ENCODE measurements at regions of chr1 and their contacts with region 1.

Region 1: GRCh38 chr1:91876040-91876470 is 9.9 kb downstream of the TGFBR3 start:
- DNase-seq: peak; percentile 61
- H3K4me3 Mint-ChIP-seq: no peak overlapping the region
- H3K27ac Mint-ChIP-seq: peak overlapping the region; percentile 5
- H3K4me1 Mint-ChIP-seq: peaks cover 74% of the 10 kb centered on the region
- H3K27me3 Mint-ChIP-seq: no peaks in the 10 kb centered on the region

Region 2: GRCh38 chr1:91732291-91733107 is 143.6 kb before region 1 on chr1:
- CTCF ChIA-PET with region 1: no interaction called
- intact Hi-C with region 1: loop called (anchors 5 kb)
- DNase-seq: peak; percentile 24
- H3K4me3 Mint-ChIP-seq: no peak overlapping the region
- H3K27ac Mint-ChIP-seq: peak overlapping the region; percentile 64
- H3K4me1 Mint-ChIP-seq: peaks cover 30% of the 10 kb centered on the region
- H3K27me3 Mint-ChIP-seq: no peaks in the 10 kb centered on the region

Region 3: DNA sequence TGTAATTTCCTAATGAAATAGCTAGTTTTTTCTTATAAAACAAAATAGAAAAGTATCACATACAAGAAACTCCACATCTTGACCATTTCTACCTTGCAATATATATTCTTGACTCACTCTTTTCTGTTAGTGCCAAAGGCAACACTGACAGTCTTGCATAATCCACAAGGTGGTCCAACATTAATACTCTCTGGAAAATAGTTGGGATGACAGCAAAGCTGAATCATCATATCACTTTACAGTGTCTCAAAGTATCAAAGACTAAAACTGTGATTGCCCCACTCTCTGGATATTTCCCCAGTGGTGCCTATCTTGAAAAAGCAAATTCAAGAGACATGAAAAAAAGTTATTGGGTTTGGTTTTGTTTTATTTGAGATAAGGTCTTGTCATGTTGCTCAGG is 24.5 kb after region 1 on chr1:
- CTCF ChIA-PET with region 1: no interaction called
- intact Hi-C with region 1: no loop called
- DNase-seq: no peak
- H3K4me3 Mint-ChIP-seq: no peak overlapping the region
- H3K27ac Mint-ChIP-seq: no peak overlapping the region
- H3K4me1 Mint-ChIP-seq: peaks cover 4% of the 10 kb centered on the region
- H3K27me3 Mint-ChIP-seq: no peaks in the 10 kb centered on the region

Region 4: DNA sequence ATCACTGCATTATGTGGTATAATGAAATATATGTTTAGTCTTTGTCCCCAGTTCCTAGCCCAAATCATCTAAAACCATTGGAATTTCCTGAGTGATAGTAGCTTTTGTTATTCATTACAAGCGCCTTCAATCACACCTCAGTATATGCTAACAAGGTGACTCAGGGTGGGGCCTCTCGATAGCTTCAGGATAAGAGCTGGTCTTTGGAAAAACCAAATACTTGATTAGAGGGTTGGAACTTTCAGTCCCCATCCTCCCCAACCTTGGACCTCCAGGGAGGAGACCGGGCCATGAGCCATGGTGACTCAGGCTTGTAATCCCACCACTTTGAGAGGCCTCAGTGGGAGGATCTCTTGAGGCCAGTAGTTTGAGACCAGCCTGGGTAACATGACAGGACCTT is 68.0 kb after region 1 on chr1:
- CTCF ChIA-PET with region 1: no interaction called
- intact Hi-C with region 1: no loop called
- DNase-seq: no peak
- H3K4me3 Mint-ChIP-seq: no peak overlapping the region
- H3K27ac Mint-ChIP-seq: no peak overlapping the region
- H3K4me1 Mint-ChIP-seq: peaks cover 13% of the 10 kb centered on the region
- H3K27me3 Mint-ChIP-seq: no peaks in the 10 kb centered on the region

Region 5: GRCh38 chr1:92201973-92202372 is 325.9 kb after region 1 on chr1:
- CTCF ChIA-PET with region 1: no interaction called
- intact Hi-C with region 1: no loop called
- DNase-seq: no peak
- H3K4me3 Mint-ChIP-seq: no peak overlapping the region
- H3K27ac Mint-ChIP-seq: peak overlapping the region; percentile 51
- H3K4me1 Mint-ChIP-seq: peaks cover 21% of the 10 kb centered on the region
- H3K27me3 Mint-ChIP-seq: no peaks in the 10 kb centered on the region